H1 (cell line): ENCODE measurements at regions of chr21 and their contacts with region 1.

Region 1: GRCh38 chr21:41411449-41412089 is 14.5 kb upstream of the MX1 start:
- DNase-seq: peak in 1 of 2 experiments; percentile 60
- H3K4me3 ChIP-seq: no peak overlapping the region
- H3K27ac ChIP-seq: no peak overlapping the region
- H3K4me1 ChIP-seq: no peaks in the 10 kb centered on the region
- H3K27me3 ChIP-seq: no peaks in the 10 kb centered on the region
- CTCF ChIP-seq: peak; percentile 38 to 53 (median 41)
- EP300 ChIP-seq: no peak
- POLR2A ChIP-seq: no peak
- RAD21 ChIP-seq: peak in 1 of 2 experiments; percentile 44; a peak in 2 of 4 replicates

Region 2: DNA sequence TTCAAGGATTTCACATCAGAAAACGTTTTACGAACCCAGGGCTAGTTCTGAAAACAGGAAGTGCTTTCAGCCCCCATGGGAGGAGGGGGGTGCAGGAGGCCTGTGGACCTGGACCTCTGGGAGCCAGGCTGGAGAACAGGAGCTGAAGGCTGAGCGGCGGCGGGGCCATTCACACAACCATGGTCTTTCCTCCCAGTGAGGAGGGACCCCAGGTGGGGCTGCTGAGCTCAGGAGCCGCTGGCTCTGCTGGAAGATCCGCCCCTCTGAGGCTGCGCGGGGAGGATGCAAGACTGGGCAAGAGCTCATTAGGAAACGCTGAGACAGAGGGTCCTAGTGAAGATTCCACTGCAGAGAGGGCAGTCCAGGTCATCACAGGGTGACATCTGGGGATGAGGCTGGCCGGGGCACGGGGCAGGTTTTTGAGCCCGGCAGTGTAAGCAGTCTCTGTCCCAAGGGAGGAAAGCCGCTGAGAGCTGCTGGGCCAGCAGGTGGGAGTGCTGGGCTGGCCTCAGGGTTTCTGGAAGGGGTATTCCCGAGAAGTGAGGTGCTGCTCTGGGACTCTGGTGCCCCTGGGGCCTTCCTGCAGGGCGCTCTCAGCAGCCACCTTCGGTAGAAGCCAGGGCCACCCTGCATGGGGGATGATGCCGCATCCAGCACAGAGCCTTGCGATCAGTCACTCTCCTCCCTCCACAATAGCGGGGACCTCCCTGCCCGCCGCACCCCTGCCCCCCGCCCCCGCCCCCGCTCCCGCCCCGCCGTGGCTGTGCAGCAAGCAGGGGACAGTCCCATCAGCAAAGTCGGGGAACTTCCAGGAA is 42.3 kb before region 1 on chr21:
- CTCF ChIA-PET with region 1: interaction called, 21 read pairs
- POLR2A ChIA-PET with region 1: no interaction called
- DNase-seq: peak in 1 of 2 experiments; percentile 80
- H3K4me3 ChIP-seq: peak overlapping the region; percentile 24 to 59 (median 44); a peak in 7 of 8 replicates
- H3K27ac ChIP-seq: no peak overlapping the region
- H3K4me1 ChIP-seq: peaks cover 0 to 15% (median 3%) of the 10 kb centered on the region in 4 experiments; a peak in 5 of 7 replicates
- H3K27me3 ChIP-seq: peaks cover 0 to 1% (median 0%) of the 10 kb centered on the region in 4 experiments; a peak in 1 of 7 replicates
- CTCF ChIP-seq: peak; percentile 40 to 50 (median 45)
- EP300 ChIP-seq: no peak
- POLR2A ChIP-seq: no peak
- RAD21 ChIP-seq: peak; percentile 54 to 56

Region 3: GRCh38 chr21:41425954-41426675 is 14.5 kb after region 1 on chr21 and contains the start of gene MX1:
- CTCF ChIA-PET with region 1: interaction called, 20 read pairs
- POLR2A ChIA-PET with region 1: no interaction called
- DNase-seq: peak in 1 of 2 experiments; percentile 60
- H3K4me3 ChIP-seq: peak within 1 kb of the TSS; percentile 24 to 66 (median 58)
- H3K27ac ChIP-seq: no peak within 1 kb of the TSS
- H3K4me1 ChIP-seq: 0 out of 7 replicates have a peak, but pooled peaks cover 0 to 3% (median 1%) of the 10 kb centered on the region in 4 experiments
- H3K27me3 ChIP-seq: peaks cover 5 to 33% (median 24%) of the 10 kb centered on the region in 4 experiments
- CTCF ChIP-seq: no peak
- EP300 ChIP-seq: no peak
- POLR2A ChIP-seq: peak in 1 of 2 experiments; percentile 50; a peak in 1 of 3 replicates
- RAD21 ChIP-seq: no peak
- total RNA-seq, gene MX1: 3.1 and 3.8 TPM in 2 replicates

Region 4: DNA sequence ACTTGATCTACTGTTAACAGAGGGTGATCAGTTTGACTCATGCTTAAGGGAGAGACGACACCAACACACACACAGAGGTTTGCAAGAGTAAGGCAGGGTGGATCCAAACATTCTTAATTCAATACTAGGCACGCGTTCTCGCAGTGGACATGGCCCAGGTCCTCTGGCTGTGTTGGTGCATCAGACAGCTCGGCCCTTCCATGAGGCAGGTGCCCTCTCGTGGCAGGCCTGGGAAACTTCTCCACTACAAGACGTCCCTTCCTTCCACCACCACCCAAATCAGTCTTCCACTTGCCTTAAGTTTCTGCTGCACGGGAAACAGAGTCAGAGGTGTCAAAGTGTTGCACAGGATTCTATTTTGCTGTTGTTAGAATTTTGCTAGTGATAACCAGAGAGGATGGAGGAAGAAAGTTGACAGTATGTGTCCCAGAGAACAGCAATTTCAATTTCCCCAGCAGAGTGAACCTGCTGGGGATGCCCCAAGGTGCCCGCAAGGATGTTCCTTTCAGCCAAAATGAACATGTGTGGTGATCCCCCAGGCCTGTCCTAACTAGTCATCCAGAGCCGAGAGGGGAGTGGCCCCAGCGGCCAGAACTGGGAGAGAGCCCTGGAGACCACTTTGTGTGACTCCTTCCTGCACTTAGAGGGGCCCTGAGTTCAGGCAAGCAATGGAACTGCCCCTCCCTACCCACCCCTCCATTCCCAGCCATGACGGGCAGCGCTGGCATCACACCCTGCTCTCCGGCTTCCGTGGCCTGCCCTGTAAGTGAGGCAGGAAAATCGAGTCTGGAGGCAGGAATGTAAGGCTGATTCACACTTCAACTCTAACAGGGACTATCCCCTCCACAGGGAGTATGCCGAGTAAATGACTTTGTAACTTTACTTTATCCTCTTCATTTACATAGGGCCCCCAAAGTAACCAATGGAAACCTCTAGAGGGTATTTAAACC is 49.3 kb after region 1 on chr21:
- CTCF ChIA-PET with region 1: interaction called, 11 read pairs
- POLR2A ChIA-PET with region 1: no interaction called
- DNase-seq: peak in 1 of 2 experiments; percentile 70
- H3K4me3 ChIP-seq: no peak overlapping the region
- H3K27ac ChIP-seq: no peak overlapping the region
- H3K4me1 ChIP-seq: peaks cover 0 to 7% (median 1%) of the 10 kb centered on the region in 4 experiments; a peak in 4 of 7 replicates
- H3K27me3 ChIP-seq: no peaks in the 10 kb centered on the region
- CTCF ChIP-seq: peak; percentile 70 to 88 (median 83)
- EP300 ChIP-seq: no peak
- POLR2A ChIP-seq: no peak
- RAD21 ChIP-seq: peak; percentile 79 to 84